Gastrocnemius medialis (tissue), 4 donors: ENCODE measurements at regions of chr1 and their contacts with region 1.

Region 1: GRCh38 chr1:246699095-246699735 is 25.0 kb upstream of the SCCPDH start:
- DNase-seq: peak; percentile 90 to 93
- ATAC-seq: peak; percentile 99 to 100
- H3K4me3 ChIP-seq: peak overlapping the region; percentile 17 to 38 (median 34)
- H3K27ac ChIP-seq: peak overlapping the region; percentile 83 to 91 (median 88)
- H3K4me1 ChIP-seq: peaks cover 9 to 13% of the 10 kb centered on the region in 2 donors
- H3K27me3 ChIP-seq: no peaks in the 10 kb centered on the region
- CTCF ChIP-seq: peak; percentile 85 to 92 (median 87)
- POLR2A ChIP-seq: peak; percentile 43 to 53

Region 2: DNA sequence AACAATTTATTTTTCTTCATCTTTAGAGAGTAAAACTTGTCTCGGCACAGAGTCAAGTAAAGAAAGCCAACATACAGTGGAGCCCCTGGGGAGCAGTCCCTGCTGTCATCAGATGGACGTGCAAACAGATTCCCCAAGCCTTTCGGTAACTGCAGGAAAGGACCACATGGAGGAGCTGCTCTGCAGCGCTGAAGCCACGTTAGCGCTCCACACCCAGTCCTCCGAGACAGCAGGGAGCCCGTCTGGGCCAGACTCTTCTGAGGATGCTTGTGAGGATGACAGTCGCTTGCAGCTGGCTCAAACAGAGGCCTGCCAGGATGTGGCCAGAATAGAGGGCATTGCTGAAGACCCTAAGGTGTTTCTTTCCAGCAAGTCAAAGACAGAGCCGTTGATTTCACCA is 52.1 kb before region 1 on chr1:
- in situ Hi-C with region 1: loop called in 1 of 4 experiments (anchors 10 kb)
- intact Hi-C with region 1: loop called (anchors 1 kb)
- DNase-seq: peak; percentile 45 to 61
- ATAC-seq: peak; percentile 89 to 92
- H3K4me3 ChIP-seq: peak overlapping the region in 2 of 4 donors; percentile 12 to 26
- H3K27ac ChIP-seq: peak overlapping the region; percentile 21 to 72 (median 64)
- H3K4me1 ChIP-seq: peaks cover 47 to 55% of the 10 kb centered on the region in 2 donors
- H3K27me3 ChIP-seq: no peaks in the 10 kb centered on the region
- CTCF ChIP-seq: peak; percentile 49 to 72 (median 62)
- POLR2A ChIP-seq: no peak

Region 3: GRCh38 chr1:246753670-246754535 is 54.7 kb after region 1 on chr1:
- in situ Hi-C with region 1: no loop called
- intact Hi-C with region 1: loop called (anchors 5 kb)
- DNase-seq: peak; percentile 6 to 26
- ATAC-seq: peak; percentile 56 to 87
- H3K4me3 ChIP-seq: no peak overlapping the region
- H3K27ac ChIP-seq: no peak overlapping the region
- H3K4me1 ChIP-seq: no peaks in the 10 kb centered on the region
- H3K27me3 ChIP-seq: no peaks in the 10 kb centered on the region
- CTCF ChIP-seq: peak; percentile 47 to 81 (median 68)
- POLR2A ChIP-seq: no peak